ENCODE measurements at regions of chr17 and their contacts with region 1.

Region 1: GRCh38 chr17:28717578-28718333 is at the start of gene RAB34:
- DNase-seq: peak; percentile 73 to 90
- ATAC-seq: peak; percentile 67 to 69
- H3K4me3 ChIP-seq: peak within 1 kb of the TSS; percentile 77
- H3K27ac ChIP-seq: peak within 1 kb of the TSS; percentile 96
- H3K4me1 ChIP-seq: peaks cover 37% of the 10 kb centered on the region
- CTCF ChIP-seq: peak; percentile 55
- EP300 ChIP-seq: no peak
- POLR2A ChIP-seq: peak; percentile 48
- RAD21 ChIP-seq: no peak
- polyA plus RNA-seq, gene RAB34: 288 and 328 TPM in 2 replicates

Region 2: DNA sequence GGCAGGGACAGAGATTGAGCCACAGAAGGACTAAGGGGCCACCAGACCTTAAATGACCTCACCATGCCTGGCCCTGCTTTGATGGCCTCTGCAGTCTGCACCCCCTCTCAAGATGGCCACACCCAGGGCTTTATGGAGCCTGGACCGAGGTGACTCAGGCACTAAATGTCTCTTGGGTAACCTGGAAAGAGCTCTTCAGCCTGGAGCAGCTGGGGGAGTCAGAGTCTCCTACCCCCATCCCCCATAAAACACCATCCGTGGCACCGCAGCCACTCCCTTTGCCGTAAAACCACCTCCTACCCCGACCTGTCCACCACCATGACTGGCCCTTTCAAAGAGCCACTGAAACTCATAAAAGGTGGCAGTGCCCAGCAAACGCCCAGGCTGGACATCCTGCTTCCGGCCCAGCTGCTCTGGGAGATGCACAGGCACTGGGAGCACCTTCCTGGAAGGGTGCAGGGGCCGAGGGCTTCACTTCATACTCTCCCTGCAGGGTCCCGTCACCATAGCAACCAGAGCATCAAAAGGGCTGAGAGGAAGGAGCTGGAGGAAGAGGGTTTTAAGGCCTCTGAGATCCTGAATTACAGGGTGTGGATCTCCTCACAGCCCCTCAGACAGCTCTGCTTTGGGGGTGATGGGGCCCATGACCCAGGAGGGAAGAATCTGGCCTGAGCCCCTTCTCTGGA is 189.3 kb before region 1 on chr17:
- CTCF ChIA-PET with region 1: no interaction called
- POLR2A ChIA-PET with region 1: no interaction called
- DNase-seq: no peak
- ATAC-seq: peak in 1 of 2 experiments; percentile 31; a peak in 2 of 6 replicates
- H3K4me3 ChIP-seq: no peak overlapping the region
- H3K27ac ChIP-seq: peak overlapping the region in 1 of 2 experiments; percentile 7; a peak in 3 of 6 replicates
- H3K4me1 ChIP-seq: peaks cover 31% of the 10 kb centered on the region
- CTCF ChIP-seq: no peak
- EP300 ChIP-seq: no peak
- POLR2A ChIP-seq: no peak
- RAD21 ChIP-seq: no peak

Region 3: GRCh38 chr17:28540231-28540630 is 177.5 kb before region 1 on chr17:
- CTCF ChIA-PET with region 1: no interaction called
- POLR2A ChIA-PET with region 1: no interaction called
- DNase-seq: no peak
- ATAC-seq: peak in 1 of 2 experiments; percentile 9; a peak in 2 of 6 replicates
- H3K4me3 ChIP-seq: no peak overlapping the region
- H3K27ac ChIP-seq: no peak overlapping the region
- H3K4me1 ChIP-seq: 0 out of 3 replicates have a peak, but pooled peaks cover 5% of the 10 kb centered on the region
- CTCF ChIP-seq: no peak
- EP300 ChIP-seq: no peak
- POLR2A ChIP-seq: no peak
- RAD21 ChIP-seq: no peak

Region 4: GRCh38 chr17:28661635-28662537 is 55.9 kb before region 1 on chr17 and contains the starts of genes SDF2 and SUPT6H:
- CTCF ChIA-PET with region 1: interaction called, 4 read pairs
- POLR2A ChIA-PET with region 1: interaction called, 12 read pairs
- DNase-seq: peak; percentile 92 to 97
- ATAC-seq: peak; percentile 92 to 97
- H3K4me3 ChIP-seq: peak within 1 kb of the TSS; percentile 74
- H3K27ac ChIP-seq: peak within 1 kb of the TSS; percentile 94 to 96
- H3K4me1 ChIP-seq: peaks cover 31% of the 10 kb centered on the region
- CTCF ChIP-seq: no peak
- EP300 ChIP-seq: no peak
- POLR2A ChIP-seq: peak; percentile 90
- RAD21 ChIP-seq: no peak
- polyA plus RNA-seq, gene SDF2: 87.9 and 113 TPM in 2 replicates
- polyA plus RNA-seq, gene SUPT6H: 51.4 and 61.0 TPM in 2 replicates

Region 5: GRCh38 chr17:28743225-28744103 is 25.7 kb after region 1 on chr17 and contains the start of gene TRAF4:
- CTCF ChIA-PET with region 1: interaction called, 977 read pairs
- POLR2A ChIA-PET with region 1: interaction called, 19 read pairs
- DNase-seq: peak; percentile 93 to 96
- ATAC-seq: peak; percentile 66 to 75
- H3K4me3 ChIP-seq: peak within 1 kb of the TSS; percentile 93
- H3K27ac ChIP-seq: peak within 1 kb of the TSS; percentile 98 to 99
- H3K4me1 ChIP-seq: peaks cover 44% of the 10 kb centered on the region
- CTCF ChIP-seq: peak; percentile 41; the same call in 2 of the 3 replicates
- EP300 ChIP-seq: peak in 1 of 2 experiments; percentile 32; a peak in 1 of 5 replicates
- POLR2A ChIP-seq: peak; percentile 97
- RAD21 ChIP-seq: 0 out of 5 replicates have a peak, but pooled peaks of 1 of the 2 experiments have one; percentile 1
- polyA plus RNA-seq, gene TRAF4: 64.0 and 70.2 TPM in 2 replicates